ENCODE measurements at regions of chr10 and their contacts with region 1.

Region 1: DNA sequence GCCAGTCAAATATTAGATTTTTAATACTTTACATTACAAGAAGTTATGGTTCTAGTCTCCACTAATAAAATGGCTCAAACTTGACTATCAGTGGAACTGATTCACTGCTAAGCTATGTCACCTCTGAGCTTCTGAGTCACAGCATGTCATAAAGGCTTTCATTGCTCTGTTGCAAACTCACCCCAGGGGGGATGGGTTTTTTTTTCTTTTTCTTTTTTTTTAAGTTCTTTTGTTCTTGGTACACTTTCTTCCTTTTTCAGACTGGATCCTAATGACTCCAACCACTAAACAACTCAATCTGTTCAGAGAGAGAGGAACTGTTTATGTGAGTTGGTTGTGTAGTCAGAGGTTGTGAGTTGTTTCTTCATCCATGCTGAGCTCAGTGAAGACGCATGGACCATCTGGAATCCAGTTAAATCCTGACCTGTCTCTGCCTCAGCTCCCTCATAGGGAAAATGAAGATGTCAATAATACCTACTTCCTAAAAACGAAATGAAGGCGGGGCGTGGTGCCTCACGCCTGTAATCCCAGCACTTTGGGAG is 11.0 kb downstream of the MYOF start:
- DNase-seq: no peak

Region 2: GRCh38 chr10:93319896-93320295 is 151.3 kb before region 1 on chr10:
- intact Hi-C with region 1: no loop called
- DNase-seq: no peak

Region 3: GRCh38 chr10:93420091-93420490 is 51.1 kb before region 1 on chr10:
- intact Hi-C with region 1: loop called (anchors 1 kb)
- DNase-seq: no peak

Region 4: DNA sequence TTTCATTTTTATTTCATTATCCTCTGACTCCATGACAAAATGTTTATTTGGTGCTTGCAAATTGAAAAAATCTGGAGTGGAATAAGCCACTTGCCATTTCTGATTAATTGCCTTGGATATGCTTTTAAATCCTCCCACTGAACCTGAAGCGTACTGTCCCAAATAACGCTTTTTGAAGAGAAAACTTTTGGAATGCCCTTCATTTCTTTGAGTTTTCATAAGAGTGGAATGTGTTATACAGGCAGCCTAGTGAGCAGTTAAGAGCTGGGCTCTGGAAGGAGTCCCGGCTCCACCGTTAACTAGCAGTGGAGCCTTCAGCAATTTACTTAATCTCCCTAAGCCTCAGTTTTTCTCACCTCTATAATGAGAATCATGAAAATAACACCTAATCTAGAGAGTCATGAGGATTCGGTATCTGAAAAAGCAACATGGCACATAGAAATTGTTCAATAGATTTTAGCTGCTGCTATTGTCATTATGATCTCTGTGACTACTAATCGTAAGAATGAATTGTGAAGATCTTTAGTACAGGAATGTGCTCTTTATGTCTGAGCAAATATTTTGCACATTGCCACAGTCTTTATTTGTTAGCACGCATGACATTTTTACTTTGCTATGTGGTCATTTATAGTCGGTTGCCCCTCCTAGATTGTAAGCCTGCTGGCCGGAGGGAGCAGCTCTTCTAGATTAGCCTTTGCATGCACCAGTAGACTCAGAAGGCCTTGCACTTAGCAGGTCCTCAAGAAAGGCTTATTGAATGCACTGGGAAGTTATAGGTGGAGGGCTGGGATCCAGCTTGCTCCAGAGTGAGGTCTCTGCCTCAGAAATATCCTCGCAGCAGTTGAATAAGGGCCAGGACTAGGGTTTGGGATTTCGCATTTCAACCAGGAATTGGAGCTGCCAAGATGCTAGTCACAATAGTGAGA is 581.9 kb after region 1 on chr10:
- intact Hi-C with region 1: no loop called
- DNase-seq: no peak

Measured in cardiac septum (tissue), 1 donor.